CD8-positive, alpha-beta T cell (primary cell): ENCODE measurements at regions of chr2 and their contacts with region 1.

Region 1: DNA sequence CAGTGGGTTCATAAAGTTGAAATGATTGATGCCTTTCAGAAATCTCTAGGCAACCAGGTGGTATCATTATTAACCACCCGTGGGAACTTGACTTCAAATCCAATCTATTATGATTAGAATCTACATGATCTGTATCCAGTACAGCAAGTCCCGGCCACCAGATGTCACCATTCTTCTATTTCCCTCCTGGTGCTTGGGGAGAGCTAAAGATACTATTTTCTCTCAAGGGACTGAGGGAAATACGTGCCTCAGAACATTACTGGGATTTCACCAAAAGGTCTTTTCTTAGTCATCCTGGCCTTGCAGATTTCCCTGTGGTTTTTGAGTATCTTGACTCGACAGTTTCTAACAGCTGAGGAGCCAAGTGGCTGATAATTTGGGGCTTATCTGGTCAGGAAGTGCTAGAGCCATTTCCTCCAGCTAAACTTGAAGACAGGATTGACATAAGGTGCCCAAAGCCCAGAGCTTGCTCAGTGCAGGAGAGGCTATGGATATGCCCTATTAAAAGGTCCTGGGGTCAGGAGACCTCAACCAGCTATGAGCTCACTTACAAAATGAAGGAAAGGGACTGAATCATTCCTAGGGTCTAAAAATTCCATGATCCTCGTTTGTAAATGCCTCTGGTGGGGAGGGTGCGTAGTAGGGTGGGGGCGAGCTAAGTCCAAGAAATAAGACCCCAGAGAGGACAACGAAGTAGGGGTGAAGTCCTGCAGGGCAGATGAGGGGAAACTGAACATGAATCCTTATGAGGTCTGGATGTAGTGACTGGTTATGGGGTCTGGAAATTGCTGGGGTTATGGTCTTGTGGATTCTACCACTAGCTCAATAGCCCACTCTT is 135.4 kb upstream of the MGAT5 start:
- DNase-seq: peak; percentile 67 to 90 (median 85)
- ATAC-seq: peak; percentile 22
- H3K4me3 ChIP-seq: no peak overlapping the region
- H3K4me3 Mint-ChIP-seq: peak overlapping the region; percentile 99
- H3K27ac ChIP-seq: no peak overlapping the region
- H3K27ac Mint-ChIP-seq: peak overlapping the region; percentile 1
- H3K4me1 ChIP-seq: peaks cover 34% of the 10 kb centered on the region
- H3K4me1 Mint-ChIP-seq: peaks cover 35% of the 10 kb centered on the region
- H3K27me3 ChIP-seq: no peaks in the 10 kb centered on the region
- H3K27me3 Mint-ChIP-seq: no peaks in the 10 kb centered on the region
- CTCF ChIP-seq: peak; percentile 85

Region 2: DNA sequence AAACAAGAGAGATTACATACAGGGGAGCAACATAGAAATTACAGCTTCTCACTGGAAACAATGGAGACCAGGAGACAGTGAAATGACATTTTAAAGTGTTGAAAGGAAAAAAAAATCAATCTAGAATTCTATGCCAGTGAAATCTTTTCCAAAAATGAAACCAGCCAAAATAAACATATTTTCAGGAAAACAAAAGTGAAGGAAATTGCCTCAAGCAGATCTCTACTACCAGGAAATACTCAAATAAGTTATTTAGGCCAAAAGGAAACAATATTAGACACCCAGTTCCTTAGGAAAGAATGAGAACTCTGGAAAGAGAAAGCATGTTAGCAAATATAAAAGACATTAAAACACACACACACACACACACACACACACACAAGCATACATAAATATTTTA is 210.3 kb before region 1 on chr2:
- CTCF ChIA-PET with region 1: no interaction called
- POLR2A ChIA-PET with region 1: no interaction called
- intact Hi-C with region 1: no loop called
- DNase-seq: no peak
- ATAC-seq: no peak
- H3K4me3 ChIP-seq: no peak overlapping the region
- H3K4me3 Mint-ChIP-seq: no peak overlapping the region
- H3K27ac ChIP-seq: no peak overlapping the region
- H3K27ac Mint-ChIP-seq: no peak overlapping the region
- H3K4me1 ChIP-seq: no peaks in the 10 kb centered on the region
- H3K4me1 Mint-ChIP-seq: no peaks in the 10 kb centered on the region
- H3K27me3 ChIP-seq: no peaks in the 10 kb centered on the region
- H3K27me3 Mint-ChIP-seq: peaks cover 11% of the 10 kb centered on the region
- CTCF ChIP-seq: no peak

Region 3: GRCh38 chr2:134161170-134161547 is 42.7 kb after region 1 on chr2:
- CTCF ChIA-PET with region 1: interaction called, 18 read pairs
- POLR2A ChIA-PET with region 1: interaction called, 3 read pairs
- intact Hi-C with region 1: no loop called
- DNase-seq: no peak
- ATAC-seq: no peak
- H3K4me3 ChIP-seq: no peak overlapping the region
- H3K4me3 Mint-ChIP-seq: no peak overlapping the region
- H3K27ac ChIP-seq: no peak overlapping the region
- H3K27ac Mint-ChIP-seq: peak overlapping the region; percentile 66
- H3K4me1 ChIP-seq: peaks cover 38% of the 10 kb centered on the region
- H3K4me1 Mint-ChIP-seq: peaks cover 81% of the 10 kb centered on the region
- H3K27me3 ChIP-seq: no peaks in the 10 kb centered on the region
- H3K27me3 Mint-ChIP-seq: no peaks in the 10 kb centered on the region
- CTCF ChIP-seq: no peak

Region 4: GRCh38 chr2:134218930-134219658 is 100.6 kb after region 1 on chr2:
- CTCF ChIA-PET with region 1: interaction called, 30 read pairs
- POLR2A ChIA-PET with region 1: interaction called, 5 read pairs
- intact Hi-C with region 1: no loop called
- DNase-seq: peak in 8 of 9 experiments; percentile 14 to 70 (median 56)
- ATAC-seq: peak; percentile 51
- H3K4me3 ChIP-seq: peak overlapping the region in 1 of 2 experiments; percentile 18
- H3K4me3 Mint-ChIP-seq: peak overlapping the region; percentile 72
- H3K27ac ChIP-seq: peak overlapping the region in 1 of 2 experiments; percentile 58
- H3K27ac Mint-ChIP-seq: peak overlapping the region; percentile 93
- H3K4me1 ChIP-seq: peaks cover 45% of the 10 kb centered on the region
- H3K4me1 Mint-ChIP-seq: peaks cover 68% of the 10 kb centered on the region
- H3K27me3 ChIP-seq: no peaks in the 10 kb centered on the region
- H3K27me3 Mint-ChIP-seq: no peaks in the 10 kb centered on the region
- CTCF ChIP-seq: no peak

Region 5: GRCh38 chr2:134320930-134321329 is 202.4 kb after region 1 on chr2:
- CTCF ChIA-PET with region 1: interaction called, 12 read pairs
- POLR2A ChIA-PET with region 1: no interaction called
- intact Hi-C with region 1: no loop called
- DNase-seq: peak in 8 of 9 experiments; percentile 5 to 58 (median 36)
- ATAC-seq: peak; percentile 60
- H3K4me3 ChIP-seq: no peak overlapping the region
- H3K4me3 Mint-ChIP-seq: peak overlapping the region; percentile 23
- H3K27ac ChIP-seq: no peak overlapping the region
- H3K27ac Mint-ChIP-seq: peak overlapping the region; percentile 70
- H3K4me1 ChIP-seq: peaks cover 43% of the 10 kb centered on the region
- H3K4me1 Mint-ChIP-seq: peaks cover 95% of the 10 kb centered on the region
- H3K27me3 ChIP-seq: no peaks in the 10 kb centered on the region
- H3K27me3 Mint-ChIP-seq: no peaks in the 10 kb centered on the region
- CTCF ChIP-seq: no peak

Region 6: GRCh38 chr2:134454931-134455330 is 336.4 kb after region 1 on chr2:
- CTCF ChIA-PET with region 1: interaction called, 17 read pairs
- POLR2A ChIA-PET with region 1: no interaction called
- intact Hi-C with region 1: loop called in 1 of 2 experiments (anchors 1 kb)
- DNase-seq: no peak
- ATAC-seq: no peak
- H3K4me3 ChIP-seq: no peak overlapping the region
- H3K4me3 Mint-ChIP-seq: no peak overlapping the region
- H3K27ac ChIP-seq: no peak overlapping the region
- H3K27ac Mint-ChIP-seq: no peak overlapping the region
- H3K4me1 ChIP-seq: no peaks in the 10 kb centered on the region
- H3K4me1 Mint-ChIP-seq: no peaks in the 10 kb centered on the region
- H3K27me3 ChIP-seq: no peaks in the 10 kb centered on the region
- H3K27me3 Mint-ChIP-seq: no peaks in the 10 kb centered on the region
- CTCF ChIP-seq: no peak

Region 7: DNA sequence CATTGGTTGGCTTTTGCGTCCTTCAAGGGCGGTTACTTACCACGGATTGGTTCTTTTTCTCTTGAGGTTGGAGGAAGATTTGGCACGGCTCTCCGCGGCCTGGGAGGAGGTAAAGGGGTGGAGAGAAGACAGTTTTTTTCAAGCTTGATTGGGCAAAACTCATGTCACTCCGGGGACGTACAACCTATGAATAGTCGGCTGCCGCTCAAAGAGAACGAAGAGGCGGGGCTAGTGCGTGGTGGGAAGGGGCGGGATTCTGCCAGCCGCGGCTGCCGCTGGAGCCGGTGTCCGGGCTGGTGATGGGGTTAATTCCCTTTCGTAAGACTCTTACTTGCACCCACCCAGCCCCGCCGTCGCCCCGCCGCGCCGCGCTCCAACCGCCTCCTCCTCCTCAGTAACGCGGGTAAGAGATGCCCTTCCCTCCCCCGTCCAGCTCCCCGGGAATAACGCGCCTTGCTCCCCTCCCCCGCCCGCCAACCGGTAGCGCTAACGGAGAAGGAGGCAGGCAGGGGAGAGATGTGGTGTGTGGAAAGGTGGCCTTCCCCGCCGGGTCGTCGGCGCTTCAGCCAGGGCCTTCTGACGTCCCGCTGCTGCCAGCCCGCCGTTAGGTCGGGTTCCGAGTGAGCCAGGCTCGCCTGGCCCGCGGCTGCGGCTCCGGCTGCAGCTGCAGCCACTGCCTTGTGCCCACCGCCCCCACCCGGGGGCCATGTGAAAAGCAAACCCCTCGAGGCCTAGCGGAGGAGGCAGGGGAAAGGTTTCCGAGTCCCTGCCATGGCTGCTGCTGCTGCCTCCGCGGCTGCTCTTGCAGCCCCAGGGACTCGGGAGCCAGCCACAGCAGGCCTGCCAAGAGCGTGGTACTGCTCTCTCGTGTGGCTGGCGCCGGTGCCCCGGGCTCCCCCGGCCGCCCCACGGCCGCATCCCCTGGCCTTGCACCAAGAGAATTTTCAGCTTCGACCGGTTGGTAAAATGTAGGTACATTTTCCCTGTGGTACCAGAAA is 1413.0 kb after region 1 on chr2 and contains the start of gene R3HDM1:
- CTCF ChIA-PET with region 1: no interaction called
- POLR2A ChIA-PET with region 1: no interaction called
- intact Hi-C with region 1: loop called in 1 of 2 experiments (anchors 10 kb)
- DNase-seq: peak; percentile 88 to 99 (median 94)
- ATAC-seq: peak; percentile 75
- H3K4me3 ChIP-seq: peak within 1 kb of the TSS; percentile 74 to 84
- H3K4me3 Mint-ChIP-seq: no peak within 1 kb of the TSS
- H3K27ac ChIP-seq: peak within 1 kb of the TSS; percentile 79 to 91
- H3K27ac Mint-ChIP-seq: no peak within 1 kb of the TSS
- H3K4me1 ChIP-seq: peaks cover 15% of the 10 kb centered on the region
- H3K4me1 Mint-ChIP-seq: peaks cover 29% of the 10 kb centered on the region
- H3K27me3 ChIP-seq: no peaks in the 10 kb centered on the region
- H3K27me3 Mint-ChIP-seq: no peaks in the 10 kb centered on the region
- CTCF ChIP-seq: no peak
- total RNA-seq, gene R3HDM1: 35.3 to 48.2 TPM